Activated naive CD4-positive, alpha-beta T cell treated with anti-CD3 and anti-CD28 coated beads, Interleukin-2, amount 10 ng/mL, durations not matched to agents 7 days and 5 days (primary cell): ENCODE measurements at regions of chr9 and their contacts with region 1.

Region 1: GRCh38 chr9:129131300-129132145 is 20.3 kb downstream of the PTPA start:
- DNase-seq: peak; percentile 90
- H3K4me3 Mint-ChIP-seq: no peak overlapping the region
- H3K27ac Mint-ChIP-seq: peak overlapping the region; percentile 79
- H3K4me1 Mint-ChIP-seq: peaks cover 6% of the 10 kb centered on the region
- H3K27me3 Mint-ChIP-seq: no peaks in the 10 kb centered on the region

Region 2: GRCh38 chr9:129145822-129146292 is 14.3 kb after region 1 on chr9:
- CTCF ChIA-PET with region 1: interaction called, 48 read pairs
- DNase-seq: no peak
- H3K4me3 Mint-ChIP-seq: no peak overlapping the region
- H3K27ac Mint-ChIP-seq: no peak overlapping the region
- H3K4me1 Mint-ChIP-seq: peaks cover 25% of the 10 kb centered on the region
- H3K27me3 Mint-ChIP-seq: no peaks in the 10 kb centered on the region

Region 3: GRCh38 chr9:129174085-129174723 is 42.7 kb after region 1 on chr9:
- CTCF ChIA-PET with region 1: interaction called, 35 read pairs
- DNase-seq: peak; percentile 88
- H3K4me3 Mint-ChIP-seq: peak overlapping the region; percentile 71
- H3K27ac Mint-ChIP-seq: peak overlapping the region; percentile 42
- H3K4me1 Mint-ChIP-seq: peaks cover 32% of the 10 kb centered on the region
- H3K27me3 Mint-ChIP-seq: peaks cover 78% of the 10 kb centered on the region

Region 4: GRCh38 chr9:129446828-129447550 is 315.5 kb after region 1 on chr9:
- CTCF ChIA-PET with region 1: no interaction called
- DNase-seq: no peak
- H3K4me3 Mint-ChIP-seq: no peak overlapping the region
- H3K27ac Mint-ChIP-seq: no peak overlapping the region
- H3K4me1 Mint-ChIP-seq: peaks cover 2% of the 10 kb centered on the region
- H3K27me3 Mint-ChIP-seq: peaks cover 68% of the 10 kb centered on the region

Region 5: DNA sequence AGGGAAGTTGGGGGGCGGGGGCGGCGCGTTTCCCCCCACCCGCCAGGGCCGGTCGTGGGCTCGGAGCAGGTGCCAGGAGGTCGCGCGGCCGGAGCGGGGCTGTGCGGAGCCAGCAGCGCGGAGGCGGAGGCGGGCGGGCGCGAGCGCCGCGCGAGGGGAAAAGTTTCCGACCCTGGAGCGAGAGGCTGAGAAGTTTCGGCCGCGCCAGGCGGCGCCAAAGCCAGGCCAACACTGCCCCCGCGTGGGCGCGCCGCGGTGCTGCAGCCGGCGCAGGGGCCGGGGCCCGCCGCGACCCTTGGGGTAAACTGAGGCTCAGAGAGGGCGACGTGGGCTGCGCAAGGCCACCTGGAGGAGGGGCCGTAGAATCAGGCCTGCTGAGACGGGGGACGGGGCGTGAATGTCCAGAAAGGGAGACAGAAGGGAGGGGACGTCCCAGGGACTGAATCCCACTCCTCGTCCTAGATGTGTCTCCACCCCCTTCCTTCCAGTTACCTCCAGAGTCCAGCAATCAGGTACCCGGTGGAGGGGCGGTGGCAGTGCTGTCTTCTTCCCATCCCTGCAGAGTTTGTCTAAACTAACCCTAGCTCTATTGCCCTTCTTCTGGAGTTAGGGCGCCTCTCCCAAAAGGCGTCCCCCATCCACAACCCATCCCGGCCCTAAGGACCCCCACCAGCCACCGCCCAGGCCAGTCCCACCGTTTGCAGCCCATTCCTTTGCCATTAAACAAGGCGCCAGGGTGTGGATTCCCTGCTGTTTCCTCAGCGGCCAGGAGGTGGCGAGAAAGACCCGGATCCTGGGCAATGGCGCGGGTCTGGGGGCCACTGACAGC is 479.2 kb after region 1 on chr9:
- CTCF ChIA-PET with region 1: interaction called, 24 read pairs
- DNase-seq: peak; percentile 80
- H3K4me3 Mint-ChIP-seq: peak overlapping the region; percentile 64
- H3K27ac Mint-ChIP-seq: no peak overlapping the region
- H3K4me1 Mint-ChIP-seq: peaks cover 47% of the 10 kb centered on the region
- H3K27me3 Mint-ChIP-seq: peaks cover 53% of the 10 kb centered on the region